ENCODE measurements at regions of chr15 and their contacts with region 1.

Region 1: DNA sequence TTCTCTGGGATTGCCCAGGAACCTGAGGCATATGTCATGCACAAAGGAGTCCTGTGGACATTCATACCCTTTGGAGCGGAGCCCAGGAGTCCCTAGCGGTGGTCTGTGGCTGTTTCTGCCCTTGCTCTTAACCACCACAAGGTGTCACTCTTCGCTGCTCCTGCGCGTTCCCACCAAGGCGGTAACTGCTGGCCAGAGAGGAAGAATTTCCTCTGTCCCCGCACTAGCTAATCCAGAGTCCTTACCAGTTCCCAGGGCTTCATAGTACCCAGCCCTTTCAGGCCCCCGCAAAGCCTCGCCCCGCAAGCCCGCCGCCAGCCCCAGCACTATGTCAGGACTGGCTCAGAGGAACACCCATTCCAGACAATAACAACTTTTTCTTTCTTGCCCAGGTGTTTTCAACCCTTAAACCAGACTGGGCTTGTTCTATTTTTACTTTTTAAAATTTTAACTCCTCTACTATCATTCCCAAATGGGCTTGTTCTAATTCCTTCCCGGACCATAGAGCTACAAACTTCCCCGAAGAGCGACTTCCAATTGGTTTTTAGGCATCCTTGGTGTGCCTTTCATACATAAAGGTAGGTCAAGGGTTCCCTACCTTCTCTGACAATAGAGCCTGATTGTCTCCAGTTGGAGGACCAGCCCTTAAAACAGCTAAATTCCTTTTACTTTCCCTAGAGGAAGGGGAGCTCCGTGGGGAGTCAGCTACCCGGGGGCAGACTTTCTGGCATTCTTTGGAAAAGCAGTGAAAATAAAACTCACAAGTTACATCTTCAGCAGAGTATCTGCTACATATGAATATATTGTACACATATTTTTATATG is 31.8 kb upstream of the ZNF774 start:
- DNase-seq: peak; percentile 58
- H3K4me3 ChIP-seq: 0 out of 2 replicates have a peak overlapping the region, but pooled peaks have one; percentile 12
- CTCF ChIP-seq: peak; percentile 98

Region 2: GRCh38 chr15:89946781-89947221 is 373.5 kb before region 1 on chr15:
- CTCF ChIA-PET with region 1: no interaction called
- POLR2A ChIA-PET with region 1: no interaction called
- DNase-seq: no peak
- H3K4me3 ChIP-seq: no peak overlapping the region
- CTCF ChIP-seq: no peak

Region 3: DNA sequence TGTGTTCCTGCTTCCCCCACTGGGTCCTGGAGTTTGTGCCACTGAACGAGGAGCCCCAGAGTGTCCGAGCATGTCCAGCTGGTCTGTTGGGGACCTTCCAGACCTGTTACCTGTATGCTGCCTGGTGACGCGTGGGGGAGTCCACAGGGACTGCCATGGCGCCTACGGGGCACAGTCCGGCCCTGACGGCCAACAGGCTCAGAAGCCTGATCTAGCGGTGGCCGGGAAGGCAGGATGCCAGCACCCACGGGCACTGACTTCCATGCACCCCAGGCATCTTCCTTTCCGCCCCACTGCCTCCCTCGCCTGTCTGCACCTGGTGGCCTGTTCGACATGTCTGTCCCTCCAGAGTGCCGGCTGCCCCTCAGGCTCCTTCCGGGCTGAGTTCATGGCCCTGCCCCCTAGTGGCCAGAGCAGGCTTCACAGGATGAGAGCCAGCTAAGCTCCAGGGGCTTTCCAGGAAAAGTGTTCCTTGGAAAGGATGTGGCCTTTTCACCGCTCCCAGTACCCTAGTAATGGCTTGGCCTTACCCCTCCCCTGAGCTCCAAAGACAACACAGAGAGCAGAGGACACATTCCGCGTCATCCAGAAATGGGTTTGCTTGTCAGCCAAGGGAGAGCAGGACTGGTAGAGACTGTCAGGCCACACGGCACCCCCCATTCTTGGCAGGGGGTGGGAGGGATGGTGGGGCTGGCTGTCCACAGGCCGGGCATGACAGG is 19.1 kb before region 1 on chr15:
- CTCF ChIA-PET with region 1: interaction called, 86 read pairs
- POLR2A ChIA-PET with region 1: no interaction called
- DNase-seq: no peak
- H3K4me3 ChIP-seq: no peak overlapping the region; the same call in 1 of the 2 replicates
- CTCF ChIP-seq: peak; percentile 88

Region 4: GRCh38 chr15:90362936-90363212 is 42.6 kb after region 1 on chr15:
- CTCF ChIA-PET with region 1: interaction called, 16 read pairs
- POLR2A ChIA-PET with region 1: no interaction called
- DNase-seq: peak; percentile 71
- H3K4me3 ChIP-seq: no peak overlapping the region
- CTCF ChIP-seq: no peak

Region 5: GRCh38 chr15:90463381-90463780 is 143.1 kb after region 1 on chr15:
- CTCF ChIA-PET with region 1: interaction called, 51 read pairs
- POLR2A ChIA-PET with region 1: no interaction called
- DNase-seq: peak; percentile 33
- H3K4me3 ChIP-seq: no peak overlapping the region
- CTCF ChIP-seq: no peak

Region 6: GRCh38 chr15:90497912-90498311 is 177.6 kb after region 1 on chr15:
- CTCF ChIA-PET with region 1: interaction called, 12 read pairs
- POLR2A ChIA-PET with region 1: no interaction called
- DNase-seq: no peak
- H3K4me3 ChIP-seq: no peak overlapping the region
- CTCF ChIP-seq: no peak

Region 7: DNA sequence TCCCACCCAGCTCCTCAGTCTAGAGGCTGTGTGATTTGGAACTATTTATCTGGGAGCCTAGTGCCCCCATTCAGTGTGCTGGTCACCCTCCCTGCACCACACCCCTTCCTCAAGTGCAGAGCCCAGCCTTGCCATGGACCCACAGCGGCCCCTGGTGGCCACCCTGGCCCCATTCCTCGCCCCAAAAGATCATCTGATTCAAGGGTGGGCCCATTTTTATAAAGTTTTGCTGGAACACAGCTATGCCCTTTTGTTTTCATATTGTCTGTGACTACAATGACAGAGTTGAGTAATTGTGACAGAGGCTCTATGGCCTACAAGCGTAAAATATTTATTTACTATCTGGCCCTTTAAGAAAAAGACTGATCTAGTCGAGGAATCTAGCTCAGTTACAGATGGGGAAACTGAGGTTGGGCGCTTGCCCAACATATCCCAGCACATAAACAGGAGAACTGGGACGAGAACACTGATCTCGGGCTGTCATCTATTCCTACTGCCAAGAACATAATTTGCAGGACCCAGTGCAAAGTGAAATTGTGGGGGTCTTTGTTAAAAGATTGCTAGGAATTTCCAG is 565.9 kb after region 1 on chr15:
- CTCF ChIA-PET with region 1: interaction called, 16 read pairs
- POLR2A ChIA-PET with region 1: no interaction called
- DNase-seq: no peak
- H3K4me3 ChIP-seq: no peak overlapping the region
- CTCF ChIP-seq: peak; percentile 95